Mucosa of descending colon (tissue), 3 donors: ENCODE measurements at regions of chr9 and their contacts with region 1.

Region 1: DNA sequence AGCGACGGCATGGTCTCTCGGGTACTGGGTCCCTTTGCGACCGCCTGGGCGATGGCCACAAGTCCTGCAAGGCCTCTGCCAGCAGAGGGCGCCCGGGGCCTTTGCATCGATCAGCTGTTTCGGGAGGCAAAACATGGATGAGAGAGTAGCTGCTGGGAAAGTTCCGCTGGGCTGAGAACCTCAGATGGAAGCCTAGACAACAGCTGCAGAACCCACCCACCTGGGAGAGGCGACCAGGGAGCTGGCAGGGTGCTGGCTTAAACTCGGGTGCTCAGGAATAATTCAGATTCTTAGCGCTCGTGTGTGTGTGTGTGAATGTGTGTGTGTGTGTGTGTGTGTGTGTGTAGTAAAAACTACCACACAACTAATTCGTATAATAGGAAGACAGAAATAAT is 50.0 kb downstream of the TRIM32 start:
- DNase-seq: peak; percentile 66 to 86 (median 83)
- ATAC-seq: peak; percentile 83
- H3K4me3 ChIP-seq: no peak overlapping the region
- H3K4me1 ChIP-seq: no peaks in the 10 kb centered on the region
- CTCF ChIP-seq: peak; percentile 78

Region 2: GRCh38 chr9:116860509-116861120 is 123.5 kb after region 1 on chr9:
- intact Hi-C with region 1: loop called in 1 of 2 experiments (anchors 10 kb)
- DNase-seq: peak in 2 of 3 donors; percentile 42 to 79
- ATAC-seq: peak; percentile 78
- H3K4me3 ChIP-seq: no peak overlapping the region
- H3K4me1 ChIP-seq: no peaks in the 10 kb centered on the region
- CTCF ChIP-seq: peak; percentile 57

Region 3: DNA sequence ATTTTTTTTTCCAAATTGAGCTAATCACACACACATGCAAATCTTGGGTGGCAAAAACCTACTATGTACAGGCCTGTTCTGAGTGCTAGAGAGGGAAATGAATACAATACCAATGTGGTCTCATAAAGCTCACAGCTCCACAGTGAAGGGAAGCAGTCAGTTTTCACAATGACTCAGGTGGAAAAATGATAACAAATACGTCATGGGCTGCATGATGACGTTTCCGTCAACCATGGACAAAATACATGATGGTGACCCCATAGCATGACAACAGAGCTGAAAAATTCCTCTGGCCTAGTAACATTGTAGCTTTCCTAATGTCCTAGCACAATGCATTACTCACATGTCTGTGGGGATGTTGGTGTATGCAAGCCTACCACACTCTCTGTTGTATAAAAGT is 202.5 kb after region 1 on chr9:
- intact Hi-C with region 1: no loop called
- DNase-seq: no peak
- ATAC-seq: no peak
- H3K4me3 ChIP-seq: no peak overlapping the region
- H3K4me1 ChIP-seq: no peaks in the 10 kb centered on the region
- CTCF ChIP-seq: no peak